ENCODE measurements at regions of chr18 and their contacts with region 1.

Region 1: DNA sequence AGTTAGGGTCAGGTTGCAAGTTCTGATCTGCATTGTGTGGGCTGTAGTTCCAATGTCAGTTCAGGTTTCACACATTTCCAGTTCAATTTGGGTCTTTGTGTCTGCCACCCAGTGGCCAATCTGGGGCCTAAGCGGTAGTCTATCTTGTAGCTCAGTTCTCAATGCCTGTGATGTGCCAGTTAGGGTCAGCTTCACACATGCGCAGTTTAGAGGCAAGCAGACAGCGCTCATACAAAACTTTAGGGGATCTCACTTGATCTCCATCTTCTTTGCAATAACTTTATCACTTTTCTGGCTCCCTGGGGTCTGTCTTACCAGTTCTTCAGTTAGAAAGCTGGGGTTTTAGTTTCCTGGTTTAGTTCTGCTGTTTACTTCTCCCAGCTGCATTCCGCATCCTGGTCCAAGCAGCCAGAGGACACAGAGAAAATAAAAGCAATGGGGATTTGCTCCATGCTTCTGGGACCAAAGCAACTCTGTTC is 11.0 kb upstream of the ZNF24 start:
- DNase-seq: peak; percentile 71
- H3K4me3 ChIP-seq: peak overlapping the region in 1 of 4 donors; percentile 10
- H3K27ac ChIP-seq: peak overlapping the region in 1 of 4 donors; percentile 40
- H3K4me1 ChIP-seq: peaks cover 0 to 4% (median 0%) of the 10 kb centered on the region in 4 donors
- H3K27me3 ChIP-seq: no peaks in the 10 kb centered on the region
- CTCF ChIP-seq: peak; percentile 56 to 67 (median 63)
- EP300 ChIP-seq: no peak
- POLR2A ChIP-seq: no peak

Region 2: DNA sequence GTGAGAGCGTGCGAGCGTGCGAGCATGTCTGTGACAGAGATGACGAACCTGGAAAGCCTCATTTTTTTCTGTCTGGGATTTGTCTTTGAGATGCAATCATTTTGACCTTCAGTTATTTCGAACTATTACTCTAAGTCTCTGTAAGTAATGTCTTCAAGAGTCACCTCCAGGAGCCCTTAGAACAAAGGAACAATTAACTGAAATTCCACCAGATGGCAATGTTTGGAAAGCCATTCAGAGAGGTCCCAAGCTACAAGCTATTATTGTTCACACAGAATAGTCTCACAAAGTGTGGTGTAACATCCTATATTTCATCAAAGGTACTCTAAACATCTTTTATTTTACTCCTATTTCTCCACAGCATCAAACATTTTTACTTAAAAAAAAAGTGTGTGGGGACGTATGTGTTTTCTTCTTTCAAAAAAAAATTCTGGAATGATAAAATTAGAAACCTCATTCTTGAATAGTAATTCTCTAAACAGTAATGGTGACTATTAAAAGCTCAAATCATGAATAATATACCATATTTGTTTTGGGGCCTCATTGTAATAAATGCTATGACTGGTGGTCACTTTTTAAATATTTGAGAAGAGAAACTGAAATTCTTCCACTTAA is 349.1 kb before region 1 on chr18:
- in situ Hi-C with region 1: loop called in 1 of 4 experiments (anchors 25 kb)
- intact Hi-C with region 1: no loop called
- DNase-seq: no peak
- H3K4me3 ChIP-seq: no peak overlapping the region
- H3K27ac ChIP-seq: no peak overlapping the region
- H3K4me1 ChIP-seq: no peaks in the 10 kb centered on the region
- H3K27me3 ChIP-seq: no peaks in the 10 kb centered on the region
- CTCF ChIP-seq: peak; percentile 54 to 69 (median 60)
- EP300 ChIP-seq: no peak
- POLR2A ChIP-seq: no peak

Region 3: GRCh38 chr18:35231052-35231451 is 124.1 kb before region 1 on chr18:
- in situ Hi-C with region 1: loop called in 2 of 4 experiments (anchors 5 to 10 kb)
- intact Hi-C with region 1: loop called (anchors 5 kb)
- DNase-seq: peak; percentile 87
- H3K4me3 ChIP-seq: no peak overlapping the region
- H3K27ac ChIP-seq: no peak overlapping the region
- H3K4me1 ChIP-seq: peaks cover 0 to 5% (median 2%) of the 10 kb centered on the region in 4 donors
- H3K27me3 ChIP-seq: no peaks in the 10 kb centered on the region
- CTCF ChIP-seq: peak; percentile 87 to 96 (median 91)
- EP300 ChIP-seq: no peak
- POLR2A ChIP-seq: no peak

Region 4: DNA sequence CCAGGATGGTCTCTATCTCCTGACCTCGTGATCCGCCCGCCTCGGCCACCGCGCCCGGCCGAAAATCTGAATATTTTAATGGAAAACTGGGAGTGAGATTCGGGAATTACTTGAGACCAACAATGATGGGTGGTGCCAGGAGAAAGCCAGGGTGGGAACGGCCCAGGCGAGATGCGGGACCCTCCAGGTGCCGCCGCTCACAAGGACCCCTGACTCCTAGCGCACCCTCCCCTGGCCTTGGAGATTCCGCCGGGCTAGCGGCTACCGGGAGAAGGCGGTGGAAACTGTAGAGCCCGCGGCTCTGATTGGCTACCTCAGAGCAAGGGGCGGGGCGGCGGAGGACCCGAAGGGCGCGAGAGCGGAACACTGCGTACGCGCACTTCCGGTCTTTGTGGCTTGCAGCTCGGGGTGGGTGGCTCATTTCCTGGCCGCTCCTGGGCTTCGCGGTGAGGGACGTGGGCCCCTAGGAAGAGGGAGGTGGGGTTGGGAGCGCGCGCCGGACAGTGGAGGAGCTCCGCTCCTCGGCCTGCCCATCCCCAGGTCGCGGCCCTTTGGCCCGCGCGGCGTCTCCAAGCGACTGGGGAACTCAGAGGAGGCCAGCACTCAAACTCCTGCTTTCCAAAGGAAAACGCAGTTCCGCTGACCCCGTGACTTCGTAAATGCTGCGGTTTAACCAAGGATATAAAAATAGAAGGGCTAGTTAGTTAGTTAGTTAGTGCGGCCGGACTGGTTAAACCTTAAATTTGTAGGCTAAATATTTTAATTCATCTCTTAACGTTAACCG is 114.3 kb before region 1 on chr18 and contains the start of gene ZNF397:
- in situ Hi-C with region 1: loop called in 2 of 4 experiments (anchors 5 to 10 kb)
- intact Hi-C with region 1: no loop called
- DNase-seq: peak; percentile 99
- H3K4me3 ChIP-seq: peak within 1 kb of the TSS; percentile 60 to 80 (median 71)
- H3K27ac ChIP-seq: peak within 1 kb of the TSS; percentile 93 to 96 (median 95)
- H3K4me1 ChIP-seq: peaks cover 3 to 17% (median 11%) of the 10 kb centered on the region in 4 donors
- H3K27me3 ChIP-seq: no peaks in the 10 kb centered on the region
- CTCF ChIP-seq: no peak
- EP300 ChIP-seq: no peak
- POLR2A ChIP-seq: peak; percentile 94
- total RNA-seq, gene ZNF397: 21.8 to 60.6 (median 32.0) TPM

Region 5: GRCh38 chr18:35917044-35917443 is 561.9 kb after region 1 on chr18:
- in situ Hi-C with region 1: no loop called
- intact Hi-C with region 1: no loop called
- DNase-seq: no peak
- H3K4me3 ChIP-seq: no peak overlapping the region
- H3K27ac ChIP-seq: no peak overlapping the region
- H3K4me1 ChIP-seq: no peaks in the 10 kb centered on the region
- H3K27me3 ChIP-seq: peaks cover 8% of the 10 kb centered on the region
- CTCF ChIP-seq: no peak
- EP300 ChIP-seq: no peak
- POLR2A ChIP-seq: no peak